ENCODE measurements at regions of chr3 and their contacts with region 1.

Region 1: GRCh38 chr3:44338010-44338827 is at the start of gene TCAIM:
- DNase-seq: peak; percentile 95 to 97
- ATAC-seq: peak; percentile 95 to 97
- H3K4me3 ChIP-seq: peak within 1 kb of the TSS; percentile 77 to 95 (median 86)
- H3K27ac ChIP-seq: peak within 1 kb of the TSS; percentile 91 to 99 (median 98)
- H3K4me1 ChIP-seq: peaks cover 26 to 34% of the 10 kb centered on the region in 2 donors
- H3K27me3 ChIP-seq: no peaks in the 10 kb centered on the region
- CTCF ChIP-seq: no peak
- POLR2A ChIP-seq: peak; percentile 86 to 93
- total RNA-seq, gene TCAIM: 15.5 to 26.9 (median 22.7) TPM

Region 2: DNA sequence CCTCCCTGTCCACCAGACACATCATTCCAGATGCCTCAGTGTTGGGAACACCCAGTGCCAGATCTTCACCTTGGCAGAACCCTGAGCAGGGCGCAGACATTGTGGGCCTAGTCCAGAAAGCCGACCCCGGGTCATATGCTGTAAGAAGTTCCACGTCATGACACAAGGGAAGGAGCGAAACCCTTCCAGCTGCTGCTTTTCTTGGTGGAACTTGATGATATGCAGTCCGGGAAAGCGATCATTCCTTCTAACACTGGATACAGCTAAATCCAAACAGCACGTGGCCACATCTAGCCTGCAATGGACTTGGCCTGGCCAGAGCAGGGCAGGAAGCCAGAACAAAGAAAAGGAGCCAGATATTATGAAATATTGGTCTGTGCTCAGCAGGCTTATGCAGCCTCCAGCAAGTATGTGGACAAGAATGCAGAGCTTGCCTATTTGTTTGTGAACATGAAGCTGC is 1337.1 kb before region 1 on chr3:
- in situ Hi-C with region 1: no loop called
- intact Hi-C with region 1: loop called (anchors 10 kb)
- DNase-seq: peak; percentile 89 to 94
- ATAC-seq: peak; percentile 92 to 93
- H3K4me3 ChIP-seq: peak overlapping the region in 3 of 4 donors; percentile 16 to 41 (median 27)
- H3K27ac ChIP-seq: peak overlapping the region; percentile 73 to 81 (median 80)
- H3K4me1 ChIP-seq: peaks cover 41 to 47% of the 10 kb centered on the region in 2 donors
- H3K27me3 ChIP-seq: no peaks in the 10 kb centered on the region
- CTCF ChIP-seq: no peak
- POLR2A ChIP-seq: no peak

Region 3: DNA sequence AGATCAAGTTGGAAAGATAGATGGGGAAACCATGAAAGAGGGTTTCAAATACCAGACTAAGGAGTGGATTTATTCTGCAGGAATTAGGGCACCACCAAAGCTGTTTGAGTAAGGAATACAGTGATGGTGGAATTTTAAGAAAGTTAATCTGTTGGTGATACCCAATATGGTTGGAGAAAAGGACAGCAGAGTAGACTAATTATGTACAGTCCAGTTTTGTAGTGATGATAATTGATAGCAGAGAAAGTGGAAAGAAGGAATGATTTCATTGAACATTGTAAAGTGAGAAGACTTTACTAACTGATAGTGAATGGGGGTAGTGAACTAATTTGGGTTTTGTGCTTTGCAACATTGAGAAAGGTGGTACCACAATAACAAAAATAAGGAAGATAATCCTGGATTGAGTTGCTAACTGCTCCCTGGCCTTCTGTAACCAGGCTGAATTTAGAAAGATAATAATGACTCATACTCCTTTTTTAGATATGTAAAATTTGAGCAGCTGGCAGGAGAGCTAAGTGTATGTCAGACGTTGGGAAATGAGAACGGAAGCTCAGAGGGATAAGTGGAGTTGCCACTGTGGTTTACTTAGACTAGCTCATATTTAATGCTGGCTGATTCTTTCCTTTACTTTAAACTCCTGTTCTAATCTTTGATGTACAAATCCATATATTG is 17.3 kb after region 1 on chr3:
- in situ Hi-C with region 1: no loop called
- intact Hi-C with region 1: loop called (anchors 1 kb)
- DNase-seq: peak; percentile 32 to 61
- ATAC-seq: peak; percentile 100
- H3K4me3 ChIP-seq: no peak overlapping the region
- H3K27ac ChIP-seq: peak overlapping the region; percentile 82 to 89 (median 84)
- H3K4me1 ChIP-seq: peaks cover 31 to 36% of the 10 kb centered on the region in 2 donors
- H3K27me3 ChIP-seq: no peaks in the 10 kb centered on the region
- CTCF ChIP-seq: no peak
- POLR2A ChIP-seq: no peak

Region 4: DNA sequence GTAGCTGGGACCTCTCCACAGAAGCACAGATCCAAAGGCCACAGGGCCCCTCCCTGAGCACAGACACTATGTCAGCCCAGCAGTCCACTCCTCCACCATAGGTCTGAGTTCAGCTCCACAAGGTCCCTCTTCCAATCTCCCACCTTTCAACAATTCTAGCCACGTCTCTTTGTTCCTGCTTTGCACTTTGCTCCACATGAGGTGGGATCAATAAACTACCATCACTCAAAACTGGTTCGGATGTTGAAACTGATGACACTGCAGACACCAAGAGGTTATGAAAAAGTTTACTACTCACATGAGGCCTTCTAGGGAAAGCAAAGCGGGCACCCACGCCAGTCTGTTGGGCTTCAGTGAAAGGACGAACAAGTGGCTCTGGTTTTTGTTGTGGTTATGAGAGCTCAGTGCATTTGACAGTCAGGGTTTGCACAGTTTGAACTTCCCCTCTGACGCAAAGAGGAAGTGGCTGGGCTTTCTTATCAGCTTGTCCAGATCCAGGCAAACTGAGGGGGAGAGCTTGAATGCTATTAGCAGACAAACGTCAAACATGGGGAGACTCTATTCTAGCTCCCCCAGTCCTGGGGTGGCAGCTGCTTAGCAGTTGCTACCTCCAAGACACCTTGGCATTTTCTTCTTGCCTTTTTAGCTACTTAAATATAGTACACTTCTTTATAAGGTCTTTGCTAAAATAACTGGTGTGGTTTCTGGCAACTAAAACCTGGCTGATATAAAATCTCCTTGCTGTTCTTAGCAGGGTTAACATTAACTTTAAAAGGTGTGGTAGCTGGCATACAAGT is 101.5 kb after region 1 on chr3:
- in situ Hi-C with region 1: no loop called
- intact Hi-C with region 1: loop called (anchors 5 kb)
- DNase-seq: peak; percentile 49 to 54
- ATAC-seq: peak; percentile 78 to 83
- H3K4me3 ChIP-seq: peak overlapping the region in 2 of 4 donors; percentile 16 to 34
- H3K27ac ChIP-seq: peak overlapping the region; percentile 75 to 85 (median 79)
- H3K4me1 ChIP-seq: peaks cover 0 to 9% of the 10 kb centered on the region in 2 donors
- H3K27me3 ChIP-seq: no peaks in the 10 kb centered on the region
- CTCF ChIP-seq: no peak
- POLR2A ChIP-seq: peak; percentile 29 to 38

Region 5: GRCh38 chr3:44510000-44510368 is 171.8 kb after region 1 on chr3:
- in situ Hi-C with region 1: loop called in 1 of 4 experiments (anchors 25 kb)
- intact Hi-C with region 1: loop called (anchors 5 kb)
- DNase-seq: no peak
- ATAC-seq: no peak
- H3K4me3 ChIP-seq: peak overlapping the region; percentile 64 to 83 (median 77)
- H3K27ac ChIP-seq: peak overlapping the region; percentile 88 to 91 (median 89)
- H3K4me1 ChIP-seq: peaks cover 13 to 15% of the 10 kb centered on the region in 2 donors
- H3K27me3 ChIP-seq: no peaks in the 10 kb centered on the region
- CTCF ChIP-seq: no peak
- POLR2A ChIP-seq: no peak

Region 6: GRCh38 chr3:44624749-44625480 is 286.7 kb after region 1 on chr3 and contains the start of gene ZNF197:
- in situ Hi-C with region 1: no loop called
- intact Hi-C with region 1: loop called (anchors 5 kb)
- DNase-seq: peak; percentile 77 to 84
- ATAC-seq: peak; percentile 98 to 99
- H3K4me3 ChIP-seq: peak within 1 kb of the TSS; percentile 69 to 93 (median 81)
- H3K27ac ChIP-seq: peak within 1 kb of the TSS; percentile 82 to 93 (median 92)
- H3K4me1 ChIP-seq: peaks cover 11 to 30% of the 10 kb centered on the region in 2 donors
- H3K27me3 ChIP-seq: no peaks in the 10 kb centered on the region
- CTCF ChIP-seq: peak in 1 of 5 experiments; percentile 40
- POLR2A ChIP-seq: peak in 1 of 2 donors; percentile 58
- total RNA-seq, gene ZNF197: 14.3 to 21.5 (median 19.6) TPM

Region 7: GRCh38 chr3:45188719-45189659 is 850.8 kb after region 1 on chr3:
- in situ Hi-C with region 1: no loop called
- intact Hi-C with region 1: no loop called
- DNase-seq: no peak
- ATAC-seq: no peak
- H3K4me3 ChIP-seq: no peak overlapping the region
- H3K27ac ChIP-seq: no peak overlapping the region
- H3K4me1 ChIP-seq: no peaks in the 10 kb centered on the region
- H3K27me3 ChIP-seq: no peaks in the 10 kb centered on the region
- CTCF ChIP-seq: no peak
- POLR2A ChIP-seq: no peak

Measured in gastrocnemius medialis (tissue), 4 donors.